GM10248 (cell line): ENCODE measurements at regions of chr2 and their contacts with region 1.

Region 1: DNA sequence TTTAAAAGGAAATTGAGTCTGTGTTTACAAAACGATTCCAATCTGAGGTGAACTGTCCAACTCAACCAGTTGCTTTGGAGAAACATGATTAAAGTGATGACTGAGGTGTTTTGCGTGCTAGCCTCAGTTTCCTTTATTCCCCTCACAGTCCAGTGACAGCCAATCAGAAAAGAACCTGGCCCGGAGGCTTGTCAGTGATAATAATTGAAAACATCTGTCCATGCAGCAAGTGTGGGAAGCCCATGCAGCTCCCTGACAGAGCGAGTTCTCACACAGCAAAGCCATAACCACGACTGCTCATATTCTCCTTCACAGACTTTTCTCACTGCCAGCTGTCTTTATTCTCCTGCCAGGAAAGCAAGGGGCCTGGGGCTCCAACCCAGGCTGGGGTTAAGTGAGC is 613.4 kb downstream of the ARHGAP15 start:
- DNase-seq: no peak
- CTCF ChIP-seq: no peak

Region 2: GRCh38 chr2:143321994-143322393 is 420.6 kb before region 1 on chr2:
- CTCF ChIA-PET with region 1: no interaction called
- POLR2A ChIA-PET with region 1: no interaction called
- DNase-seq: no peak
- CTCF ChIP-seq: no peak

Region 3: DNA sequence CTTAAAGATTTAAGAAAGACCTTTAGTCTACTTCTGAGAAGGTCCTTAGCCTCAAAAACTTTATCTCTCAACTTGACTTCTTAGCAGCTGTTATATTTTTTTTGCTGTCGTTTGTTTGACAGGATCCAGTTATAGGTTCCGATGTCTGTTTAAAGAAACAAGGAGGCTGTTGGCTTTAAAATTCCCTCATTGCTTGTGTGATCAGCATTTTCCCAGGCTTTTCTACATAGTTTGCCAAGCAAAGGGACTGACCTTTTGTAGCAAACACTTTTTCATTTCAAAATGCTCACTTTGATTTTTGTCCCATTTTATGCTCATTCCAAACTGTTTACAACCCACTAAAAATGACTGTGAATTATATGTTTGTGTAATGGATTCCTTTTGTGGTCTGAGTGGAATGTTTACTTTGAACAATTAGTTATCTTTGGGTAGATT is 218.4 kb before region 1 on chr2:
- CTCF ChIA-PET with region 1: no interaction called
- POLR2A ChIA-PET with region 1: no interaction called
- DNase-seq: no peak
- CTCF ChIP-seq: no peak

Region 4: DNA sequence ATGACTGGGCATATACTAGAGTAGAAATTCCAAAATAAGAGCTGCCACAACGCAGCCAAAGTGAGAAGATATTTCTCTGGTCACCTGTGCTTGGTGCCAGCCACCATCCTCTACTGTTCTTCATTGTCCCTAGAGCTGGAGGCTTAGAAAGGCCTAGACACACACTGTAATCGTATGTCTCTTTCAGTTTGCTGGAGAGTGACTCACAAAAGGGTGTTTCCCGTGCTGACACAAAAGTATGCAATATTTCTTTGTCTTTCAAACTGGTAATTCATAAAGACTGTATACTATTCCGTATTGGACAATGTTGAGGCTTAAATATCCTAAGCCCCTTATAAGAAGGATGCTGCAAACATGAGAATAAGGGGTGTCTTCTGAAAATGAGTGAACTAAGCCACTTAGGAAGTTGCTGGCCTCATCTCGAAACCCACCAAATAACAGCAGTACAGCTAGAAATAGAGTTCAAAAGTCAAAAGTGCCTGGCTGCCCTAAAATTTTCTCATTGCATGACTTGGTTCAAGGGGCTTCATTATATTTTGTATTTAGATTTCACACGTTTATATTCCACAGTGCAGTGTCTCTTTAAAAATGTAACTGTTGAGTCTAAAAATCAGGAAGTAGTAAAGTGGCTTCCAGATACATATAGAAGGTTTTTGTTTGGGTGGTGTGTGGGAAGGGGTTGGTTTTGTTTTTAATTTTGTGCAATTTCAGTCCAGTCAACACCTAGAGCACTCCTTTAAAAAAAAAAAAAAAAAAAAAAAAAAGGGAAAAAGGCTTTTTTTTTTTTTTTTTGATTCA is 12.2 kb before region 1 on chr2:
- CTCF ChIA-PET with region 1: interaction called, 14 read pairs
- POLR2A ChIA-PET with region 1: no interaction called
- DNase-seq: peak; percentile 20
- CTCF ChIP-seq: no peak

Region 5: GRCh38 chr2:143754742-143755141 is 12.2 kb after region 1 on chr2:
- CTCF ChIA-PET with region 1: interaction called, 13 read pairs
- POLR2A ChIA-PET with region 1: no interaction called
- DNase-seq: no peak
- CTCF ChIP-seq: no peak